ENCODE measurements at regions of chr11 and their contacts with region 1.

Region 1: DNA sequence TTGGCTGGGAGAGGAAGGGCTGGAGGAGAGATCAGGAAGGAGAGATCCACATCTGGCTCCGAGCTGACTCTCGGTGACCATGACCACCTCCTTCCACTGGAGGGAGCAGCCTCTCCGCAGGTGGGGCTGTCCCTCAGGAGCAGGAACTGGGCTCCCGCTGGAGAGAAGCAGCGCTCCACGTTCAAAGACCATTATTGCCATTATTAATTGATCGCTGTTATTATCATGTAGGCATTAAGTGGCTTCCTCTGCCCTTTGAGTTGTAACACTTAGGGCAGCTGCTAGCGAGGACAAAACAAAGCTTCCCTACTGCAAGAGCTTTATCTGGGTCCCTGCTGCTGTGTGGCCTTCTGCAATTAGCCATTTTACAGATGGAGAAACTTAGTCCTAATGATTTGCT is 251.9 kb downstream of the ST3GAL4 start:
- DNase-seq: peak in 4 of 5 donors; percentile 24 to 46 (median 32)
- ATAC-seq: peak in 3 of 4 donors; percentile 75 to 83 (median 80)
- H3K4me3 ChIP-seq: no peak overlapping the region
- H3K27ac ChIP-seq: no peak overlapping the region
- H3K4me1 ChIP-seq: peaks cover 0 to 2% (median 0%) of the 10 kb centered on the region in 12 donors
- H3K27me3 ChIP-seq: peaks cover 0 to 58% (median 12%) of the 10 kb centered on the region in 9 donors
- CTCF ChIP-seq: peak; percentile 35 to 68 (median 58)
- POLR2A ChIP-seq: no peak

Region 2: GRCh38 chr11:126989942-126990715 is 382.8 kb after region 1 on chr11:
- intact Hi-C with region 1: loop called in 9 of 10 experiments (anchors 2 to 10 kb)
- DNase-seq: peak; percentile 41 to 76 (median 70)
- ATAC-seq: peak; percentile 78 to 85 (median 84)
- H3K4me3 ChIP-seq: no peak overlapping the region
- H3K27ac ChIP-seq: no peak overlapping the region
- H3K4me1 ChIP-seq: peaks cover 0 to 4% (median 0%) of the 10 kb centered on the region in 12 donors
- H3K27me3 ChIP-seq: peaks cover 0 to 31% (median 7%) of the 10 kb centered on the region in 9 donors
- CTCF ChIP-seq: peak; percentile 79 to 93 (median 86)
- POLR2A ChIP-seq: no peak